WTC11 (cell line): ENCODE measurements at regions of chr16 and their contacts with region 1.

Region 1: DNA sequence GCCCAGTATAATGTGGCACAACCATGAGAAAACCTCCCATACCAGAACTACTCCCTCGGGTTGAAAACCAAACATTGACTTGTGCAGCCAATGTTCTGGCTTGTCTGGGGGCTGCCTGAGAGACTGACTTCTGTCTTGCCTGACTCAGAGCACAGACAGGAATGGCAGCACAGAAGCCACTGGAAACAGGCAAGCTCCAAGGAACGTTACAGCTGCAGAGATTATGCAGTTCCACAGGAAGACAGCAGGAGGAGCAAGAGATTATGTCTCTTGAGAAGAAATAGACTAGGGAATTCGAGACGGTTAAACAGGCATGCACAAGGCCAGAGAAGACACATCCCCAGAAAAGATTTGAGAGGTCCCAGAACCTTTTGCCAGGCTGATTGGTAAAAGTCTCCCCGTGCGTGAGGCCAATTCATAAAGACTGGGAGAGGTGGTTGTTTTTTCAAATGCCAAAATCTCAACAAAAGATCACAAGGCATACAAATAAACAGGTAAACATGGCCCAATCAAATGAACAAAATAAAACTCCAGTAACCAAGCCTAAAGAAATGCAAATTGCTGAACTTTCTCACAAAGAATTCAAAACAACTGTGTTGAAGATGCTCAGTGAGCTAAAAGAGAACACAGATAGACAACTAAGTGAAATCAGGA is 90.6 kb upstream of the CDH5 start:
- DNase-seq: peak; percentile 69
- ATAC-seq: peak; percentile 65
- H3K4me3 Mint-ChIP-seq: no peak overlapping the region
- H3K27ac Mint-ChIP-seq: no peak overlapping the region
- H3K4me1 Mint-ChIP-seq: peaks cover 43% of the 10 kb centered on the region
- H3K27me3 Mint-ChIP-seq: peaks cover 19% of the 10 kb centered on the region
- CTCF ChIP-seq: peak; percentile 62

Region 2: GRCh38 chr16:66315210-66315825 is 39.4 kb after region 1 on chr16:
- CTCF ChIA-PET with region 1: interaction called, 47 read pairs
- POLR2A ChIA-PET with region 1: no interaction called
- DNase-seq: peak; percentile 70
- ATAC-seq: peak; percentile 95
- H3K4me3 Mint-ChIP-seq: no peak overlapping the region
- H3K27ac Mint-ChIP-seq: no peak overlapping the region
- H3K4me1 Mint-ChIP-seq: peaks cover 8% of the 10 kb centered on the region; the same call in 1 of the 2 replicates
- H3K27me3 Mint-ChIP-seq: no peaks in the 10 kb centered on the region; the same call in 1 of the 2 replicates
- CTCF ChIP-seq: peak; percentile 89